Common myeloid progenitor, CD34-positive (primary cell): ENCODE measurements at regions of chr10 and their contacts with region 1.

Region 1: DNA sequence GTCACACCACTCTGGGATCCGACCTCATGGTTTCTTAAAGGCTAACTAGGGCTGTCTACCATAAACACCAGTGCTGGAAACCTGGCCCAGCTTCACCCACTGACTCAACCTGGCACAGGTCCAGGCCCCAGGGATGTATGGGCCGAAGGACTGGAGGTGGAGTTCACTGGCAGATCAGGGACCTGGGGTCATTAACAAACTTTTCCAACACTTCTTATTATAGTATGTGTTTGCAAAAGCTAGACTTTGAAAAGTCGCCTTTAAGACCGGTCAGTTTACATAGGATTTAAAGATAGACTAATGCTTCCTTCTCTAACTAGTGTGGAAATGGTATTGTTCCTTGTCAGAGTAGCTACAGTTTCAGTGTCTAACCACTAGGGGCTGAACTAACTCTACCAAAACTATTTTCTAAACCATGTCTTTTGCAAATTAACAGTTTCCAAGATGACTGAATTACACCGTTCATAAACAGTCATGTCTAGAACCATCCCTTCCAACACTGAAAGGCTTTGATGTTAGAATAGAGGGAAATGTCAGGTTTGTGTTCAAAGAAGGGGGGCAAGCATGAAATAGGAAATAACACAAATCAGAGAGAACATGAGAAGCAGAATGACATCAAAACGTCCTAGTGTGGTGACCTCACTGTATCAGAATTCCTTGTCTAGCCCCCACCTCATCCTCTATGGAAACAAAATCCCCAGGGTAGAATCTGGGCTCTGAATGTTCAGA is 29.7 kb downstream of the STN1 start:
- DNase-seq: peak; percentile 62 to 79 (median 78)
- H3K4me3 ChIP-seq: no peak overlapping the region
- H3K27ac ChIP-seq: no peak overlapping the region
- H3K4me1 ChIP-seq: peaks cover 0 to 7% (median 1%) of the 10 kb centered on the region in 4 experiments
- H3K27me3 ChIP-seq: no peaks in the 10 kb centered on the region

Region 2: DNA sequence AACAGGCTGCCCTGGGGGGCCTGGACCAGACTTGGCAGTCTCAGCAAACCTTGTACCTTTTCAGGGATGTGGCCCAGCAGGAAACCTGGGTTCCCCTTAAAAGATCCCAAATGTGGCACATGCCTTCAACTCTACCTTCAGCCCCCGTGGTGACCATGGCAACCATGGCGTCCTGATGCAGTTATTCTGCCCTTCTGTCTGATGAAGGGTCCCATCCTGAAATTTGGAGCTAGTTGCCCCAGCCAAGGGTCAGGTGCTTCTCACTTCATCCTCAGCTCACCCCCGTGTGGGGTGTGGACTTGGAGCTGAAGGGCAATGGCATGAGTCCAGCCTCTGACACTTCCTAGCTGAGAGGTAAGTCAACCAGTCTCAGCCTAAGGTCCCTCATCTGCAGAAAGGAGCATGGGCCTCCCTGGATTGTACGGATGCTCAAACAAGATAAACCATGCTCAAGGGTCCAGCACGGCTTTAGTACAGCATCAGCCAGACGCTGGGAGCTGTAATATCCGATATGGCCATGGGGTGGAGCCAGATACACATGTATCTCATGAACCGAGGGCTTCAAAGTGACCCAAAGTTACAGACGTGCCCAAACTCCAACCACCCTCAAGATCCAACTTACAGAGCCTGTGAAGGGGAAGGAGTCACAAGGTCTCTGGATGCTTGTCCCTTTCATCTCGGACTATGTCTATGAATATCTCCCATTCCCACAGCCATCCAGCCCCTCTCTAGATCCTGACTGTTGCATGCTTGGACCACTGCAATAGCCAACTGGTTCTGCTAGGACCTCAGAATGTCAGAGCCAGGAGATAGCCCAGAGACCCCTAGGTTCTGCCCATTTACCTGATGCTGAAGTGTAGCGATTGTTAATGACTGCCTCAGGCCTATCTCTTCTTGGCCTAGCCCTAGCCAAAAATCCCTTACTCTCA is 175.4 kb before region 1 on chr10:
- CTCF ChIA-PET with region 1: interaction called, 75 read pairs
- POLR2A ChIA-PET with region 1: no interaction called
- DNase-seq: peak; percentile 75 to 90 (median 82)
- H3K4me3 ChIP-seq: no peak overlapping the region
- H3K27ac ChIP-seq: no peak overlapping the region
- H3K4me1 ChIP-seq: no peaks in the 10 kb centered on the region
- H3K27me3 ChIP-seq: no peaks in the 10 kb centered on the region

Region 3: GRCh38 chr10:103872137-103872931 is 15.9 kb before region 1 on chr10:
- CTCF ChIA-PET with region 1: interaction called, 20 read pairs
- POLR2A ChIA-PET with region 1: no interaction called
- DNase-seq: no peak
- H3K4me3 ChIP-seq: no peak overlapping the region
- H3K27ac ChIP-seq: no peak overlapping the region
- H3K4me1 ChIP-seq: no peaks in the 10 kb centered on the region
- H3K27me3 ChIP-seq: no peaks in the 10 kb centered on the region

Region 4: DNA sequence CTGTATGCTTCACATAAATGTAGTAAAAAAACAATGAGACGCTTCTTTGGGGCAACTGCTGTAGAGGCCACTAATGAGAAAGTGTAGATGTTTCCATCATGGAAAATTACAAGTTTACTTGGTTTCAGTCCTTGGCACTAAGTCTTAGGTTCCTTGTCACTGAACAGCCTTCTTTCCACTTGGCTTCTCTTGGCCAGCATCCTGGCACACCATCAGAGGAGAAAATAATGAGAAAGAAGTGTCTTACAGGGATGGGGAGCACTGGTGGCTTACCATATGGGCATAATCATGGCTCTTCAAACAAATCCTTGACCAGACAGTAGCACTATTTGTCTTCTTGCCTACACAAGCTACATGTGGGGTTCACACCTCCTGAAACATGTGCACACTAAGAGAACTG is 10.4 kb before region 1 on chr10:
- CTCF ChIA-PET with region 1: interaction called, 11 read pairs
- POLR2A ChIA-PET with region 1: no interaction called
- DNase-seq: no peak
- H3K4me3 ChIP-seq: no peak overlapping the region
- H3K27ac ChIP-seq: no peak overlapping the region
- H3K4me1 ChIP-seq: no peaks in the 10 kb centered on the region
- H3K27me3 ChIP-seq: no peaks in the 10 kb centered on the region

Region 5: DNA sequence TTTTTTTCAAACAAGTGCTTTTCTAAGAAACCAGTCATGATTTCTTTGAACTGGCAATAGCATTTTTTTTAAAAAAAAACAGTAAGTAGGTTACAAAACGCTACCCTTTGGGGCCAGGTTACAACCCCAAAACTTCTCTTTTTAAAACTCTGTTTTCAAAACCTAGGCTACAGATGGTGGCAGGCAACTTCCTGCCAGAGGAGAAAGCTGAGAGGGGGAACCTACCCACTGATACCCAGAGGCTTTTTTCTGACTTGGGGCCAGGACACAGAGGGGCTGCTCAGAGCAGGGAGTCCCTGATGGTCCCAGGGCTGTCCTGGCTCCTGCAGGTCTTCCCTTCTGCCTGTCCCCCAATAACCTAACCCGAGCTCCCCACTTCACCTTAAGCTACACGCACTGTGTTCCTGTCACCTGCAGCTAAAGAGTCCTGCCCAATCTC is 22.8 kb after region 1 on chr10:
- CTCF ChIA-PET with region 1: interaction called, 16 read pairs
- POLR2A ChIA-PET with region 1: no interaction called
- DNase-seq: peak; percentile 52 to 90 (median 88)
- H3K4me3 ChIP-seq: peak overlapping the region in 6 of 7 experiments; percentile 13 to 65 (median 50)
- H3K27ac ChIP-seq: peak overlapping the region; percentile 48 to 75
- H3K4me1 ChIP-seq: peaks cover 42 to 83% (median 66%) of the 10 kb centered on the region in 4 experiments
- H3K27me3 ChIP-seq: no peaks in the 10 kb centered on the region

Region 6: GRCh38 chr10:103990121-103990520 is 101.8 kb after region 1 on chr10:
- CTCF ChIA-PET with region 1: interaction called, 23 read pairs
- POLR2A ChIA-PET with region 1: no interaction called
- DNase-seq: no peak
- H3K4me3 ChIP-seq: no peak overlapping the region
- H3K27ac ChIP-seq: no peak overlapping the region
- H3K4me1 ChIP-seq: peaks cover 0 to 4% (median 0%) of the 10 kb centered on the region in 4 experiments
- H3K27me3 ChIP-seq: no peaks in the 10 kb centered on the region

Region 7: DNA sequence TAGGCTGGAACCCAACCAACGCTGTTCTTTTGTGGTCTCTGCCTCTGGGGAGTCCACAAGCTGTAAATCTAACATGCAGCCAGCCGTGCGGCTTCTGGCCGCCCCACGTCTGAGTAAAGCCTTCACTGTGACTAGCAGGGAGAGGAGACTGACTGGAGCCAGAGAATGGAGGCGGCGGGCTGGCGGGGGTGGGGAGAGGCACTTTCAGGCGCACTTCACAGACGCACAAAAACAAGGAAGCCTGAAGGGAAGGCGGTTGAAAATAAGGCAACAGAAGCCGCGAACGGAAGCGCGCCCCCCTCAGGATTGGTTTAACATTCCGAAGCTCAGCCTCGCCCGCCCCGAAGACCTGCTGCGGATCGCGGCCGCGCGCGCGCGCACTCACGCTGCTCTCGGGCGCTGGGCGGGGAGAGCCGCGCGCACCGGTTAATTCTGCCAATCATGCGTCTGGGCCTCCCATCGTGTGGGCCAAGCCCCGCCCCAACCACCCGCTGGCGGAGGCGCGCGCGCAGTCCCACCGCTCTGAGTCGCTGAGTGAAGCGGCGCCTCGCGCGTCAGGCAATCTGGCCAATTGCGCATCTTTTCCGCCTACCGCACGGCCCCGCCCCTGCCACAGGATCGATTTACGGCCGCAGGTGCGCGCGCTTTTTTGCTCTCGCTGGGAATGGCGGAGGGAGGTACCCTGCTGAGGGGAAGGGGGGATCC is 233.4 kb after region 1 on chr10 and contains the start of gene SFR1:
- CTCF ChIA-PET with region 1: interaction called, 17 read pairs
- POLR2A ChIA-PET with region 1: no interaction called
- DNase-seq: peak; percentile 99 to 100 (median 99)
- H3K4me3 ChIP-seq: peak within 1 kb of the TSS; percentile 80 to 99 (median 98)
- H3K27ac ChIP-seq: peak within 1 kb of the TSS; percentile 100
- H3K4me1 ChIP-seq: peaks cover 12 to 32% (median 23%) of the 10 kb centered on the region in 4 experiments
- H3K27me3 ChIP-seq: no peaks in the 10 kb centered on the region